ENCODE measurements at regions of chr4 and their contacts with region 1.

Region 1: GRCh38 chr4:154314248-154314647 is 177.4 kb downstream of the DCHS2 start:
- DNase-seq: no peak
- H3K4me3 ChIP-seq: no peak overlapping the region
- H3K27ac ChIP-seq: no peak overlapping the region
- H3K4me1 ChIP-seq: no peaks in the 10 kb centered on the region
- H3K27me3 ChIP-seq: no peaks in the 10 kb centered on the region
- CTCF ChIP-seq: no peak
- POLR2A ChIP-seq: no peak

Region 2: GRCh38 chr4:152476796-152477195 is 1837.5 kb before region 1 on chr4:
- intact Hi-C with region 1: no loop called
- DNase-seq: no peak
- H3K4me3 ChIP-seq: no peak overlapping the region
- H3K27ac ChIP-seq: no peak overlapping the region
- H3K4me1 ChIP-seq: no peaks in the 10 kb centered on the region
- H3K27me3 ChIP-seq: no peaks in the 10 kb centered on the region
- CTCF ChIP-seq: no peak
- POLR2A ChIP-seq: no peak

Region 3: GRCh38 chr4:153785910-153786721 is 528.1 kb before region 1 on chr4:
- intact Hi-C with region 1: loop called (anchors 10 kb)
- DNase-seq: no peak
- H3K4me3 ChIP-seq: peak overlapping the region in 1 of 2 donors; percentile 3
- H3K27ac ChIP-seq: no peak overlapping the region
- H3K4me1 ChIP-seq: peaks cover 25% of the 10 kb centered on the region
- H3K27me3 ChIP-seq: no peaks in the 10 kb centered on the region
- CTCF ChIP-seq: peak in 1 of 3 experiments; percentile 23
- POLR2A ChIP-seq: no peak

Region 4: DNA sequence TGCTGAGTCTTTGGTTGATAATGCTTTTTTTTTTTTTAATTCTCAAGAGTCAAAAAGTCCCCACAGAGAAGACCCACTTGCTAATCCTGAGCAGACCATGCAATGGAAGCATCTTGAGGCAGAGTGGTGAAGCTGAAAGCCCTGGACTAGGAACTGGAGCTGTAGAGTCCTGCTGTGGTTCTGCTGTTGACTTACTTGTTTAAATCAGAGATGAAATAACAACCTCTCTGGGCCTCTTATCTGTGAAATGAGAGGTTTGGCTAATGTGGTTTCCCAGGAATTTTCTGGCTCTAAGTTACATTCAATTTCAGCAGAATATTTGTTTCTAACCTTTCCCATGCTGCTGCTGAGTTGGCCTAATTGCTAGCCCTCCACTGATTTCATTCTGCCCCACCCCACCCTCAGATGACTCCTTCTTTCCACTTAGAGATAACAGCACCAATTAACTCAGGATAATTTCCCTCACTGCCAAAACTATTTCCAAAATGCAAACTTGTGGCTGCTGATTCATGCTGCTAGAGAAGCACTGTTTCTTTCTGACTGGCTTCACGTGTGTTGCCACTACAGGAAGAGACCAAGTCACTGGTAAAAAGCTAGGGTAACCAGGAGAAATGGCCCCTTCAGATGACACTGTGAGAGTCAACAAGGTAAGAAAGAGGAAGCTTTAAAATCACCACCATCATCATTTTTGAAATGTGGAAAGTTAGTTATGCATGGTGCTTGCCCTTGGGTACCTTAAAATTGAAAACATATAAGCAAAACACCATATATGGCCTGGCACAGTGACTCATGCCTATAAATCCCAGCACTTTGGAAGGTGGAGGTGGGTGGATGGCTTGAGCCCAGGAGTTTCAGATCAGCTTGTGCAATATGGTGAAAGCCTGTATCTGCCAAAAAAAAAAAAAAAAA is 149.1 kb before region 1 on chr4:
- intact Hi-C with region 1: no loop called
- DNase-seq: no peak
- H3K4me3 ChIP-seq: no peak overlapping the region
- H3K27ac ChIP-seq: no peak overlapping the region
- H3K4me1 ChIP-seq: no peaks in the 10 kb centered on the region
- H3K27me3 ChIP-seq: no peaks in the 10 kb centered on the region
- CTCF ChIP-seq: no peak
- POLR2A ChIP-seq: no peak